ENCODE measurements at regions of chr20 and their contacts with region 1.

Region 1: GRCh38 chr20:41057999-41058896 is 29.6 kb downstream of the TOP1 start:
- DNase-seq: peak; percentile 52
- H3K4me3 Mint-ChIP-seq: no peak overlapping the region
- H3K27ac Mint-ChIP-seq: peak overlapping the region; percentile 26
- H3K4me1 Mint-ChIP-seq: peaks cover 64% of the 10 kb centered on the region
- H3K27me3 Mint-ChIP-seq: no peaks in the 10 kb centered on the region

Region 2: GRCh38 chr20:40706977-40707582 is 351.2 kb before region 1 on chr20:
- CTCF ChIA-PET with region 1: no interaction called
- POLR2A ChIA-PET with region 1: no interaction called
- intact Hi-C with region 1: no loop called
- DNase-seq: no peak
- H3K4me3 Mint-ChIP-seq: no peak overlapping the region
- H3K27ac Mint-ChIP-seq: no peak overlapping the region
- H3K4me1 Mint-ChIP-seq: no peaks in the 10 kb centered on the region
- H3K27me3 Mint-ChIP-seq: peaks cover 3% of the 10 kb centered on the region

Region 3: DNA sequence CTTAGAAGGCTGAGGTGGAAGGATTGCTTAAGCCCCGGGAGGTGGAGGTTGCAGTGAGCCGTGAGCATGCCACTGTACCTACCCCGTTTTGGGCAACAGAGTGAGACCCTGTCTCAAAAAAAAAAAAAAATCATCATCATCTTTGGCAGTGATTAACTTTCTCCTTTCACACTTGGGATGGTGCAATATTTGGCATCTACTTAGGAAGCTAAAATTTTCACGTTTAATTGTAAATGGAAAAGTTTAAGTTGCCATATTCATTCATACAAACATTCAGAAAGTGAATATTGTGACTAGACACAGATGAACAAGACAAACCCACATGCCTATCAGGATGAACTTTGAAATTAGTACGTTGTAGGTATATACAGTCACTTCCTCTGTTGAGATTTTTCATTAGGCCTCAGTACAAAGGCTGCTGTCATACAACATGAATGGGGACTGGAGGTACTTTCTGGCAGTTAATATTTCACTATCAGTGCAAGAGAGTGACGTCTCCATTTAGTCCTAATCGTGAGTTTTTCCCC is 19.3 kb before region 1 on chr20:
- CTCF ChIA-PET with region 1: no interaction called
- POLR2A ChIA-PET with region 1: no interaction called
- intact Hi-C with region 1: loop called (anchors 2 kb)
- DNase-seq: no peak
- H3K4me3 Mint-ChIP-seq: no peak overlapping the region
- H3K27ac Mint-ChIP-seq: peak overlapping the region; percentile 72
- H3K4me1 Mint-ChIP-seq: peaks cover 85% of the 10 kb centered on the region
- H3K27me3 Mint-ChIP-seq: no peaks in the 10 kb centered on the region

Region 4: GRCh38 chr20:41047975-41048305 is 10.3 kb before region 1 on chr20:
- CTCF ChIA-PET with region 1: no interaction called
- POLR2A ChIA-PET with region 1: no interaction called
- intact Hi-C with region 1: loop called (anchors 1 kb)
- DNase-seq: no peak
- H3K4me3 Mint-ChIP-seq: peak overlapping the region; percentile 76
- H3K27ac Mint-ChIP-seq: peak overlapping the region; percentile 87
- H3K4me1 Mint-ChIP-seq: peaks cover 93% of the 10 kb centered on the region
- H3K27me3 Mint-ChIP-seq: no peaks in the 10 kb centered on the region

Region 5: DNA sequence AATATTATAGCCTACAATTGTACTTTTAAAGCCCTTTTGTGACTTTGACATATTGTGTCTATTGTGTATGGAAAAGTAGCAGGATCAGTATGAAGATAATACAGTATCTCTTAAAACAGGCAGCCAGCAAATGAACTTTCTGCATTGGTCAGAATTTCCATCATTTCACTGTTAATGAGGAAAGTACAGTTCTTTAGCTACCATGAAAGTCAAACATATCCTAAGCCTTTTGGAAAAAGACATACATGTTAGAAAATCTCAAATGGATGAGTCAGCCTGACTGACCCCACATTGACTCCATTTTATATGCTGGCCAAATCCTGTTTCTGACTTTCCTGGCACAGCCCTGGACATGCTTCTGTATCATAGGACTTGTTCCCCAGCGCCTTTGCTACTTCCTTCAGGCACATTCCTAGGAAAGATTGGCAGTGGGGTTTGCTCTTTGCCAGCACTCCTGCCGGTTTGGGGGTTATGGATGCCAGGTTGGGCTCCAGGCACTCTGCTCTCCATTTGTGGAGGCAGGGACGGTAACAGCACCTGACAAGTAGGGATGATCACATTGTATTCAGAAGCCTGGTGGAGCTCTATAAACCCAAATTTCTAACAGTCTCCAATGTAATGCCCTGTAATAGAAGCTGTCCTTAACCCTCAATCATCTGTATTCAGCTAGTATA is 14.1 kb after region 1 on chr20:
- CTCF ChIA-PET with region 1: interaction called, 3 read pairs
- POLR2A ChIA-PET with region 1: no interaction called
- intact Hi-C with region 1: loop called (anchors 2 kb)
- DNase-seq: no peak
- H3K4me3 Mint-ChIP-seq: no peak overlapping the region
- H3K27ac Mint-ChIP-seq: peak overlapping the region; percentile 66
- H3K4me1 Mint-ChIP-seq: peaks cover 79% of the 10 kb centered on the region
- H3K27me3 Mint-ChIP-seq: no peaks in the 10 kb centered on the region